B cell (primary cell): ENCODE measurements at regions of chr2 and their contacts with region 1.

Region 1: GRCh38 chr2:137838255-137839092 is 125.8 kb upstream of the HNMT start:
- DNase-seq: peak; percentile 53
- ATAC-seq: no peak
- H3K4me3 ChIP-seq: no peak overlapping the region
- H3K4me3 Mint-ChIP-seq: no peak overlapping the region
- H3K27ac ChIP-seq: no peak overlapping the region
- H3K27ac Mint-ChIP-seq: no peak overlapping the region
- H3K4me1 ChIP-seq: no peaks in the 10 kb centered on the region
- H3K4me1 Mint-ChIP-seq: no peaks in the 10 kb centered on the region
- H3K27me3 ChIP-seq: no peaks in the 10 kb centered on the region
- H3K27me3 Mint-ChIP-seq: no peaks in the 10 kb centered on the region
- CTCF ChIP-seq: peak; percentile 84

Region 2: GRCh38 chr2:136423516-136423996 is 1414.9 kb before region 1 on chr2:
- CTCF ChIA-PET with region 1: interaction called, 19 read pairs
- POLR2A ChIA-PET with region 1: no interaction called
- intact Hi-C with region 1: no loop called
- DNase-seq: peak; percentile 86
- ATAC-seq: peak; percentile 100
- H3K4me3 ChIP-seq: peak overlapping the region; percentile 42 to 92 (median 57)
- H3K4me3 Mint-ChIP-seq: peak overlapping the region; percentile 84
- H3K27ac ChIP-seq: no peak overlapping the region
- H3K27ac Mint-ChIP-seq: peak overlapping the region; percentile 28
- H3K4me1 ChIP-seq: peaks cover 10% of the 10 kb centered on the region in 2 donors
- H3K4me1 Mint-ChIP-seq: peaks cover 13% of the 10 kb centered on the region
- H3K27me3 ChIP-seq: peaks cover 0 to 20% (median 4%) of the 10 kb centered on the region in 4 experiments
- H3K27me3 Mint-ChIP-seq: peaks cover 39% of the 10 kb centered on the region
- CTCF ChIP-seq: peak; percentile 86

Region 3: DNA sequence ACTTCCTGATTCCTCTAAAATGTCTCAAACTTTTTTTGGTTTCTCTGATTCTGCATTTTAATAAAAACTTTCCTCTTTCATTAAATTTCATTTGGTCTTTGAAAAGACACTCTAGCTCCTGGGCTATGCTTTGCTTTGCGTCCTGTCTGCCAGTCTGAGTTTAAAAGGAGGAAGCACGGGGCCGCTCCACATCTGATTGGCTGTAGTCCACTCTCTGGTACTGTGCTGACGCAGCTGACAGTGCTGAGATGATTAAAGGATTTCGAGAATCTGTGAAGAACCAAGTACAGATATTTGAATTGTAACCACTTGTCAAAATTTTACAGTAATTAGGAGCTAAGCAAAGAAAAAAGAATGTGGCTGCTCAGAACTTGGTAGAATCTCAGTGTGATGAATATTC is 73.8 kb before region 1 on chr2:
- CTCF ChIA-PET with region 1: no interaction called
- POLR2A ChIA-PET with region 1: no interaction called
- intact Hi-C with region 1: no loop called
- DNase-seq: no peak
- ATAC-seq: no peak
- H3K4me3 ChIP-seq: no peak overlapping the region
- H3K4me3 Mint-ChIP-seq: no peak overlapping the region
- H3K27ac ChIP-seq: no peak overlapping the region
- H3K27ac Mint-ChIP-seq: no peak overlapping the region
- H3K4me1 ChIP-seq: no peaks in the 10 kb centered on the region
- H3K4me1 Mint-ChIP-seq: no peaks in the 10 kb centered on the region
- H3K27me3 ChIP-seq: no peaks in the 10 kb centered on the region
- H3K27me3 Mint-ChIP-seq: no peaks in the 10 kb centered on the region
- CTCF ChIP-seq: no peak